ENCODE measurements at regions of chr17 and their contacts with region 1.

Region 1: DNA sequence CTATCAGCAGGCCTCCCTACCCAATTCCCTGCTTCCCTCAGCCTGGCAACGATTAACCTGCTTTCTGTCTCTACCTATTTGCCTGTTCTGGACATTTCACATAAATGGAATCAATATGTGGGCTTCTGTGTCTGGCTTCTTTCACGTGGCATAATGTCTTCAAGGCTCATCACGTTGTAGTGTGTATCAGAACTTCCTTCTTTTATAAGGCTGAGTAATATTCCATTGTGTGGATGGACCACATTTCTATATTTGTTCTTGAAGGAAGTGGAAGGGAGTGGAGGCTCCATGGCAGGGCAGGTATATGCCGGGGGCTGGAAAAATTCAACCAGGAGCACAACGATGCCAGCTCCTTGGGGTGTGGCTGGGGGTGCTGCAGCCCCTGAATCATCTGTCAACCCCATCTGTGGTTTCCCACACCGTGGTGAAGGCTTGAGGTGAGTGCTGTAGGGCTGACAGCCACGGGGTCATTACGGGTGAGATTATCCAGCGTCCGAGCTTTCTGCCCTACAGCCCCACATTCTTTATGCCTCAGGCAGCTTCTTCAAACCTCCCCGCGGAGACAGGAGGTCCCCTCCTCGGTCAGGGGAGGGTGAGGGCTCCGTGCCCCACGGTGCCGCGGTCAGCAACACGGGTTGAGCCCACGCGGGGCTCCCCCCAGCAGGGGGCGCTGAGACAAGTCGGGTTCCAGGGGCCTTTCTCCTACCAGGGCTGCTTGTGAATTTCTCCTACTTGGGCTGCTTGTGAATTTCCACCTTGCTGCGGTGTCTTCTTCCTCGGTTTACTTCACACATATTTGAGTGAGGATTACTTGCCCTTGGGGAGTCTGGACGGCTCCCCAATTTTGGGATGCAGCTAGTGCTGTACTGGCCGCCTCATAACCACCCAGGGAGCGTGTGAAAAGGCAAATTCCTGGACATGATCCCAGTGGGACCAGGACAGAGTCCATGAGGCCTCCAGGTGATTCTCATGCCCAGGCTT is 18.3 kb upstream of the WFIKKN2 start:
- DNase-seq: peak; percentile 43 to 75
- ATAC-seq: peak; percentile 80 to 87
- H3K4me3 ChIP-seq: no peak overlapping the region
- H3K27ac ChIP-seq: peak overlapping the region in 1 of 2 experiments; percentile 7; a peak in 1 of 6 replicates
- H3K4me1 ChIP-seq: peaks cover 8% of the 10 kb centered on the region
- CTCF ChIP-seq: peak; percentile 91
- EP300 ChIP-seq: no peak
- POLR2A ChIP-seq: no peak
- RAD21 ChIP-seq: peak; percentile 49 to 52

Region 2: GRCh38 chr17:50798424-50799288 is 18.4 kb before region 1 on chr17:
- CTCF ChIA-PET with region 1: interaction called, 108 read pairs
- POLR2A ChIA-PET with region 1: no interaction called
- DNase-seq: no peak
- ATAC-seq: peak in 1 of 2 experiments; percentile 28; a peak in 2 of 6 replicates
- H3K4me3 ChIP-seq: no peak overlapping the region
- H3K27ac ChIP-seq: no peak overlapping the region
- H3K4me1 ChIP-seq: no peaks in the 10 kb centered on the region
- CTCF ChIP-seq: no peak
- EP300 ChIP-seq: no peak
- POLR2A ChIP-seq: no peak
- RAD21 ChIP-seq: no peak

Region 3: DNA sequence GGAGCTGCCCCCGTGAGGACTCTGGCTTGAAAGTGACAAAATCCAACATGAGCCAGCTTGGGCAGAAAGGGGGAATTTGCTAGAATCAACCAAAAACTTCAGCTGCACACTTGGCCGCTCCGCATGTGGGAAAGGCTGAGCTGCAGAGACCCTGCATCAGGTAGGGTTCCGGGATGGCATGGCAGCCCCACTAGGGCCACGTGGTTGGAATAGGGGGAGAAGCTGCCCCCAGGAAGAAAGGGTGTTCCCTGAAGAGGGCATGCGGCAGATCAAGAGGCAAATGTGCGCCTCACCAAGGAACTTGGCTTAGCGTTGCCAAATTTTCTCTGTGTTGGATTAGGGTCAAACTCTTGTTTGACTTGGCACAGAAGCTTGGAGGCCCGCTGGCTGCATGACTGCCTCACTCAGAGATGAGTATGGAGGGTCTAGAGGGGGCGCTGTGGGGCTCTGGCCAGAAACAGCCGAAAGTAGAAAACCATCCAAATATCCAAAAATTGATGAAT is 10.9 kb before region 1 on chr17:
- CTCF ChIA-PET with region 1: interaction called, 108 read pairs
- POLR2A ChIA-PET with region 1: no interaction called
- DNase-seq: peak in 1 of 2 experiments; percentile 32
- ATAC-seq: peak in 1 of 2 experiments; percentile 32; a peak in 3 of 6 replicates
- H3K4me3 ChIP-seq: no peak overlapping the region
- H3K27ac ChIP-seq: peak overlapping the region in 1 of 2 experiments; percentile 11; a peak in 1 of 6 replicates
- H3K4me1 ChIP-seq: no peaks in the 10 kb centered on the region; the same call in 2 of the 3 replicates
- CTCF ChIP-seq: no peak
- EP300 ChIP-seq: no peak
- POLR2A ChIP-seq: no peak
- RAD21 ChIP-seq: no peak

Region 4: DNA sequence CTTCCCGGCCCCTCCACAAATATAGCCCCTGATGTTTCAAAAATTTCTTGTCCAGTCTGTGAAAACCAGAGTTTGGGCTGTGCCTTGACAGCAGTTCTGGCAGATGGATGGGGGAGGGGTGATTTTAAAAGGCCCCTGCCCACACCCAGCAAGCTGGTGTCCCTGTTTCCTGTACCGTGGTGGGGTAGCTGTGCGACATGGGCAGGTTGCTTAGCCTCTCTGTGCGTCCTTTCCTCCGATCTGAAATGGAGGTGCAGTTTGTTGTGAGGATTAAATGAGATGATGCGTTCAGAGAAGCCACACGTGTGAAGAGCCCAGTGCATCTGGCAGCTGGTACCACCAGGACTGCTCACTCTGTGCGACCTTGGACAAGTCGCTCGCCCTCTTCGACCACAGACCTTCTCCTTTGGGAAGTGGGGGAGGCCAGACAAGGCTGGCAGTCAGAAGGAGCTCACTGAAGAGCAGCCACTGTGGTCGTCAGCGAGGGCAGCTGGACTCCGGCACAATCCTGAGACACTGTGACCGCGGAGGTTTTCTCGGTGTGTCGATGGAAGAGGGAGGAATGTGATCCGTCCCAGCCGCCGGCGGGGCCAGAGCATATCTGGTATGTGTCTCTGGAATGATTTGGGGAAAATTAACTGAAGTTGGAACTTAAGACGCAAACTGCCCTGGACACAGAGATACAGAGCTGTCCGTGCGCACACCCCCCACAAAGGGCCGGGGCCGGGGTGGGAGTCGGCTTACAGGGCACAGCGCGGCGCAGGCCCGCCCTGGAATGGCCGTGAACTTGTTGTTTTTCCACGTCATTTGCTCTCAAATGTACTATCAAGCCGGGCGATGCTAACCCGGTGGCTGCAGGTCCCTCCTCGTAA is 17.6 kb after region 1 on chr17:
- CTCF ChIA-PET with region 1: interaction called, 101 read pairs
- POLR2A ChIA-PET with region 1: no interaction called
- DNase-seq: no peak
- ATAC-seq: no peak
- H3K4me3 ChIP-seq: no peak overlapping the region
- H3K27ac ChIP-seq: no peak overlapping the region
- H3K4me1 ChIP-seq: no peaks in the 10 kb centered on the region
- CTCF ChIP-seq: no peak
- EP300 ChIP-seq: no peak
- POLR2A ChIP-seq: no peak
- RAD21 ChIP-seq: no peak

Region 5: GRCh38 chr17:50893183-50893993 is 76.3 kb after region 1 on chr17:
- CTCF ChIA-PET with region 1: no interaction called
- POLR2A ChIA-PET with region 1: no interaction called
- DNase-seq: peak; percentile 55 to 68
- ATAC-seq: peak; percentile 24 to 48; a peak in 4 of 6 replicates
- H3K4me3 ChIP-seq: no peak overlapping the region
- H3K27ac ChIP-seq: peak overlapping the region; percentile 22 to 66; a peak in 4 of 6 replicates
- H3K4me1 ChIP-seq: peaks cover 45% of the 10 kb centered on the region
- CTCF ChIP-seq: no peak
- EP300 ChIP-seq: no peak
- POLR2A ChIP-seq: no peak
- RAD21 ChIP-seq: no peak

Region 6: GRCh38 chr17:50949989-50950881 is 133.2 kb after region 1 on chr17:
- CTCF ChIA-PET with region 1: interaction called, 20 read pairs
- POLR2A ChIA-PET with region 1: no interaction called
- DNase-seq: peak; percentile 95 to 96
- ATAC-seq: peak; percentile 79 to 84
- H3K4me3 ChIP-seq: 0 out of 3 replicates have a peak overlapping the region, but pooled peaks have one; percentile 3
- H3K27ac ChIP-seq: peak overlapping the region; percentile 93 to 98
- H3K4me1 ChIP-seq: peaks cover 77% of the 10 kb centered on the region
- CTCF ChIP-seq: peak; percentile 99
- EP300 ChIP-seq: no peak
- POLR2A ChIP-seq: no peak
- RAD21 ChIP-seq: peak; percentile 100

Region 7: GRCh38 chr17:51214920-51215319 is 397.9 kb after region 1 on chr17:
- CTCF ChIA-PET with region 1: no interaction called
- POLR2A ChIA-PET with region 1: no interaction called
- DNase-seq: no peak
- ATAC-seq: no peak
- H3K4me3 ChIP-seq: no peak overlapping the region
- H3K27ac ChIP-seq: no peak overlapping the region
- H3K4me1 ChIP-seq: no peaks in the 10 kb centered on the region
- CTCF ChIP-seq: no peak
- EP300 ChIP-seq: no peak
- POLR2A ChIP-seq: no peak
- RAD21 ChIP-seq: no peak

Measured in A549 (cell line).